Activated CD8-positive, alpha-beta T cell treated with anti-CD3 and anti-CD28 coated beads for 36 hours (primary cell): ENCODE measurements at regions of chr2 and their contacts with region 1.

Region 1: DNA sequence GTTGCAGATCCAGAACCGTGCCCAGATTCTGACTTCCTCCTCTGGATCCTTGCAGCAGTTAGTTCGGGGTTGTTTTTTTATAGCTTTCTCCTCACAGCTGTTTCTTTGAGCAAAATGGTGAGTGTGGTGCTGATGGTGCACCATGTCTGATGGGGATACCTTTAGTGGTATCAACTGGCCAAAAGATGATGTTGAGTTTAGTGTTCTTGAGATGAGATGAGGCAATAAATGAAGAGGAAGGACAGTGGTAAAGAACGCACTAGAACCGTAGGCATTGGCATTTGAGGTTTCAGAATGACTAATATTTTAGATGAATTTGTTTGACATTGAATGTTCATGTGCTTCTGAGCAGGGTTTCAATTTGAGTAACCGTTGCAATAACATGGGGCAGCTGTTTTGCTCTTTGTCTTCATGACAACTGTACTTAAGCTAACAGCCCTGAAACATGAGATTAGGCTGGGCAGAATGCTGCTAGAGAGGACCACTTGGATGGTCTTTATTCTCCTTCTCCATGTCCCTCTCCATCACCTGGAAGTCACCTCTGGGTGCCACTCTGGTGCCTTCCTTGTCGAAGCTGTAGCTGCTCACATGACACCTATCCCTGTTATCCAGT is 3.9 kb downstream of the CTLA4 start:
- DNase-seq: peak; percentile 72
- ATAC-seq: peak; percentile 69
- H3K4me3 Mint-ChIP-seq: peak overlapping the region; percentile 81
- H3K27ac Mint-ChIP-seq: peak overlapping the region; percentile 97
- H3K4me1 Mint-ChIP-seq: peaks cover 78% of the 10 kb centered on the region
- H3K27me3 Mint-ChIP-seq: no peaks in the 10 kb centered on the region
- CTCF ChIP-seq: no peak

Region 2: GRCh38 chr2:203830304-203831055 is 41.0 kb before region 1 on chr2:
- CTCF ChIA-PET with region 1: no interaction called
- POLR2A ChIA-PET with region 1: interaction called, 5 read pairs
- intact Hi-C with region 1: loop called (anchors 2 kb)
- DNase-seq: peak; percentile 84
- ATAC-seq: peak; percentile 94
- H3K4me3 Mint-ChIP-seq: peak overlapping the region; percentile 31
- H3K27ac Mint-ChIP-seq: peak overlapping the region; percentile 96
- H3K4me1 Mint-ChIP-seq: peaks cover 17% of the 10 kb centered on the region
- H3K27me3 Mint-ChIP-seq: no peaks in the 10 kb centered on the region
- CTCF ChIP-seq: no peak

Region 3: DNA sequence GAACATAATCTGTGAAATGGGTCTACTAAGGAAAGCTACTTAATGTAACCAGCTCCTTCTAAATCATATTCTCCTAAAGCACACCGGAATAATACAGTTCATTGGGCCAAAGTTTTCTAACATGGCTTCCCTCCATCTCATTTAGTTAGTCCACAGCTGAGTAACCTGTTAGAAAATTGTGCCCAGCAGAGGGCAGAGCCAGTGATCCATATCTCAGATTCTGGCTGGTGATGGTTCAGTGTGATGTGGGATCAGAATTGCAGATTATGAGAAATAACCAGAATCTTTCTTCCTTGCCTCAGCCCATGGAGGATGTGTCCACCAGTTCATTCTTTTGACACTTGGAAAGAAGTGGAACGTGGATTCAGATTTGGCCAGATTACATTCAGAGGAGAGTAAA is 13.3 kb before region 1 on chr2:
- CTCF ChIA-PET with region 1: interaction called, 19 read pairs
- POLR2A ChIA-PET with region 1: interaction called, 35 read pairs
- intact Hi-C with region 1: loop called (anchors 2 kb)
- DNase-seq: peak; percentile 55
- ATAC-seq: no peak
- H3K4me3 Mint-ChIP-seq: no peak overlapping the region
- H3K27ac Mint-ChIP-seq: no peak overlapping the region
- H3K4me1 Mint-ChIP-seq: peaks cover 67% of the 10 kb centered on the region
- H3K27me3 Mint-ChIP-seq: no peaks in the 10 kb centered on the region
- CTCF ChIP-seq: no peak

Region 4: DNA sequence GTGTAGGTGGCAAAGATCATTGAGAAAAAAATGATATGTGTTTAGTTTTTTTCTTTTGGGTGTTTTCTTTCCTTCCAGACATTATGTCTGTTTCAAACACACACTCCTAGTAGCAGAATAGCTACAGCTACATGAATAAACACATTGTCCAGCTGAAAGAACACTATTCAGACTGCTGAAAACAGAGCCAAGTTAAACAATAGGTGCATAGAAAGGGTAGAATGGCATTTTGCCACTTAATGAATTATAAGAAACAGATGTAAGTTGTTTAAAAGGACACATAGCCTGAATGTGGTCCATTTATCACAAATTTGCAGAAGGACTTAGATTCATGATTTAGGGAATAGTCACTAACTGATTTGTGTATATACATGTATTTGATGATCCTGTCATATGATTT is 16.2 kb after region 1 on chr2:
- CTCF ChIA-PET with region 1: interaction called, 14 read pairs
- POLR2A ChIA-PET with region 1: interaction called, 237 read pairs
- intact Hi-C with region 1: no loop called
- DNase-seq: no peak
- ATAC-seq: no peak
- H3K4me3 Mint-ChIP-seq: no peak overlapping the region
- H3K27ac Mint-ChIP-seq: no peak overlapping the region
- H3K4me1 Mint-ChIP-seq: peaks cover 57% of the 10 kb centered on the region
- H3K27me3 Mint-ChIP-seq: no peaks in the 10 kb centered on the region
- CTCF ChIP-seq: no peak

Region 5: GRCh38 chr2:203893401-203893800 is 21.9 kb after region 1 on chr2:
- CTCF ChIA-PET with region 1: interaction called, 4 read pairs
- POLR2A ChIA-PET with region 1: interaction called, 237 read pairs
- intact Hi-C with region 1: no loop called
- DNase-seq: no peak
- ATAC-seq: no peak
- H3K4me3 Mint-ChIP-seq: no peak overlapping the region
- H3K27ac Mint-ChIP-seq: peak overlapping the region; percentile 82
- H3K4me1 Mint-ChIP-seq: peaks cover 56% of the 10 kb centered on the region
- H3K27me3 Mint-ChIP-seq: no peaks in the 10 kb centered on the region
- CTCF ChIP-seq: no peak

Region 6: DNA sequence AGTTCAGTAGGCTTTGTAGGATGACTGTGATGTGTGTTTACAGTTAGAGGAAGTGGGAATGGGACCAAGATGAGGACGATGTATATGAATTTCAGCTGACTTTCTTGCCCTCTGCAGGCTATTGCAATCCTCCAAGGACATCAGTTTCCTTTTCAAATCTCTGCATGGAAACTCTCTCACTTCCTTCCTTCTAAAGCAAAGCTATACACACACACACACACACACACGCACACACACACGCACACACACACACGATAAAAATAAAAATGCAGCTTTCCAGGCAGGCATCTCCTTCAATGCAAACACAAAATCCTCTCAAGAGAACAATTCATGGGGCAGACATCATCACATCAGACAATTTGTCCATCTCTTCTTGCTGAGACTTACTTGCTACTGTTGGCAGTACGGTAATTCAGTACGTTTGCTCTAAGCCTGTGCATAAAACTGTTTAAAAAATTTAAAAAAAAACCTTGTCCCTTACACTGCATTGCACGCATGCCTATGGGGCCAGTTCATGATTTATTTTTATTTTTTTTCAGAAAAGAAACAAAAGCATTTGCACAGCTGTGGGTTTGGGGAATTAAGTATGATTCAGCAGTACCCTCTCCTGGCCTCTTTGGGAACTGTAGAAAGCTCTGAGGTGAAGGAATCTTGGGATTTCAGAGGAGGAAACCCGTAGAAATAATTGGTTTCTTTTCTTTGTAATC is 37.9 kb after region 1 on chr2:
- CTCF ChIA-PET with region 1: interaction called, 25 read pairs
- POLR2A ChIA-PET with region 1: interaction called, 11 read pairs
- intact Hi-C with region 1: no loop called
- DNase-seq: peak; percentile 32
- ATAC-seq: peak; percentile 83
- H3K4me3 Mint-ChIP-seq: no peak overlapping the region
- H3K27ac Mint-ChIP-seq: peak overlapping the region; percentile 11
- H3K4me1 Mint-ChIP-seq: peaks cover 26% of the 10 kb centered on the region
- H3K27me3 Mint-ChIP-seq: peaks cover 5% of the 10 kb centered on the region
- CTCF ChIP-seq: peak; percentile 96

Region 7: DNA sequence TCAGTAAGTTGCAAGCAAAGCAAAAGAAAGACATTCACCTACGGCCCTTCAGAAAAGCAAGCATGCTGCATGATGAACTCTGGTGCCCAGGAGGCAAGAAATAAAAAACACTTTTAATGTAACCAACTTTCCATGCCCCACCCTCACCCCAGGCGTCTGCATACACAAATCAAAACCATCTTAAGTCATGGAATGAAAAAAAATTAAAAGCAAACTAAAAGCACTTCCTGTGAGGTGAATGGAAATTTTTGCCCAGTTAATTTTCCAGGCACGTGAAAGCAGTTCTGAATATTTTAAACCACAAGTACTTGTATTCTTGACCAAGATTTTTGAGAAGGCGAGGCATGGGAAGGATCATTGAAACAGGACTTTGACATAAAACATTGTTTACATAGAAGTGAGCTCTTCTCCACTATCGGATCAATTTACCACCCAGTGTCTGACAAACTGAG is 62.6 kb after region 1 on chr2:
- CTCF ChIA-PET with region 1: interaction called, 6 read pairs
- POLR2A ChIA-PET with region 1: interaction called, 59 read pairs
- intact Hi-C with region 1: no loop called
- DNase-seq: peak; percentile 81
- ATAC-seq: peak; percentile 50
- H3K4me3 Mint-ChIP-seq: peak overlapping the region; percentile 60
- H3K27ac Mint-ChIP-seq: peak overlapping the region; percentile 95
- H3K4me1 Mint-ChIP-seq: peaks cover 58% of the 10 kb centered on the region
- H3K27me3 Mint-ChIP-seq: no peaks in the 10 kb centered on the region
- CTCF ChIP-seq: no peak